ENCODE measurements at regions of chr20 and their contacts with region 1.

Region 1: GRCh38 chr20:37901654-37902503 is 1.0 kb upstream of the VSTM2L start:
- DNase-seq: peak; percentile 39
- H3K4me3 ChIP-seq: no peak overlapping the region
- H3K27ac ChIP-seq: no peak overlapping the region
- H3K4me1 ChIP-seq: no peaks in the 10 kb centered on the region
- CTCF ChIP-seq: peak; percentile 65

Region 2: DNA sequence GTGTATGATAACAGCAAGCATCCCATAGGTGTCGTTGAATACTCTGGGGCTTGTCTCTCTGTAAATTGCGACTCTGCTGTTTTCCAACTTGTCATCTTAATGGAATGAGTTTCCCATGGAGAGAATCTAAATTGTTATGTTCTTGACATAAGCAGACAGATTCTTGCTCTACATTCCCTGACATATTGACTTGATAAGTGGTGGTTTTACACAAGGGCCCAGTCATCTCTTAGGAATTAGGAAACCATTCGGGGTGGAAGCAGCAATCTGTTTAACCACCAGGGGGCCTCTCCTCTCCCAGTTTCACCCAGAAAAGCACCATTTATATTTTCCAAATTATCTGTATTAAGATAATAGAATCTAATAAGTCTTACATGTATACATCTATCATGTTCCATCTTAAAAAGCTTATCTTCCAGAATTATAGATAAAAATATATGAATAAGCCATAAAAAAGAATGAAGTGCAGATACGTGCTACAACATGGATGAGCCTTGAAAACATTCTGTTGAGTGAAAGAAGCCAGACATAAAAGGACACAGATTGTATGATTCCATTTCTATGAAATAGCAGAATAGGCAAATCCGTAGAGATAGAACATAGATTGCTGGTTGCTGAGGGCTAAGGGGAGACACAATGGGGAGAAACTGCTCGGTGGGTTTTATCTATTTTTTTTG is 699.5 kb before region 1 on chr20:
- CTCF ChIA-PET with region 1: no interaction called
- POLR2A ChIA-PET with region 1: no interaction called
- intact Hi-C with region 1: no loop called
- DNase-seq: peak; percentile 32
- H3K4me3 ChIP-seq: no peak overlapping the region
- H3K27ac ChIP-seq: no peak overlapping the region
- H3K4me1 ChIP-seq: no peaks in the 10 kb centered on the region
- CTCF ChIP-seq: peak; percentile 92

Region 3: GRCh38 chr20:37651932-37652331 is 249.9 kb before region 1 on chr20:
- CTCF ChIA-PET with region 1: no interaction called
- POLR2A ChIA-PET with region 1: no interaction called
- intact Hi-C with region 1: loop called (anchors 5 kb)
- DNase-seq: peak; percentile 44
- H3K4me3 ChIP-seq: no peak overlapping the region
- H3K27ac ChIP-seq: no peak overlapping the region
- H3K4me1 ChIP-seq: no peaks in the 10 kb centered on the region
- CTCF ChIP-seq: peak; percentile 76

Measured in OCI-LY7 (cell line).